Left cardiac atrium (tissue), 4 donors: ENCODE measurements at regions of chr3 and their contacts with region 1.

Region 1: DNA sequence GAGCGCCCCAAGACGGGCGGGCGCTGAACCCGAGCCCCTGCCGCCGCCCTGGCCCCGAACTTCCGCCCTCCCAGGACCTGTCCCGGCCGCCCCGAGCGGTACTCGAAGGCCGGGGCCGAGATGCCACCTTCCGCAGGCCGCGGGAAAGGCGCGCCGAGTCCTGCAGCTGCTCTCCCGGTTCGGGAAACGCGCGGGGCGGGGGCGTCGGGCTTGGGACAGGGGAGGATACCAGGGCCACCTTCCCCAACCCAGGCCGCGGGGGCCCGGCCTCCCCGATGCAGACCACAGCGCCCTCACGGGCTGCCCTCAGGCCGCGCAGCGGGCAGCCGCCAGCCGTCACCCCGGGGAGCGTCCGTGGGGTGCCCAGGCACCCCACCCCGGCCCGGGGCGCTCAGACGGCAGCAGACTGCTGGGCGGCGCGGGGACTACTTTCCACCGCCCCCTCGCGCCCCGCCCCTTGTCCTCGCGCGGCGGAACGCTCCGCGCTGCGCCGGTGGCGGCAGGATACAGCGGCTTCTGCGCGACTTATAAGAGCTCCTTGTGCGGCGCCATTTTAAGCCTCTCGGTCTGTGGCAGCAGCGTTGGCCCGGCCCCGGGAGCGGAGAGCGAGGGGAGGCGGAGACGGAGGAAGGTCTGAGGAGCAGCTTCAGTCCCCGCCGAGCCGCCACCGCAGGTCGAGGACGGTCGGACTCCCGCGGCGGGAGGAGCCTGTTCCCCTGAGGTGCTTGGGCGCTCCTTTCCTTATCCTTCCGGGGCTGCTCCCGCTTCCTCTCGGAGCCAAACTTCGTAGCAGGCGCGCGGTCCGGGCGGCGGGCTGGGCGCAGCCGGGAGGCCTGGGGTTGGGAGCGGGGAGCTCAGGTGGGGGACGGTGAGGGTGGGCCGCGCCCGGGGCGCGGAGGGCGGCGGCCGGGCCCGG is at the start of gene CTNNB1:
- DNase-seq: peak; percentile 93
- ATAC-seq: peak; percentile 93 to 94
- total RNA-seq, gene CTNNB1: 169 to 207 TPM

Region 2: GRCh38 chr3:40877631-40878463 is 321.4 kb before region 1 on chr3:
- intact Hi-C with region 1: loop called in 1 of 2 experiments (anchors 10 kb)
- DNase-seq: peak; percentile 83
- ATAC-seq: peak; percentile 88 to 93

Region 3: GRCh38 chr3:40899286-40899712 is 299.9 kb before region 1 on chr3:
- intact Hi-C with region 1: no loop called
- DNase-seq: no peak
- ATAC-seq: peak in 1 of 2 donors; percentile 27

Region 4: GRCh38 chr3:40971191-40972168 is 227.7 kb before region 1 on chr3:
- intact Hi-C with region 1: loop called in 1 of 2 experiments (anchors 5 kb)
- DNase-seq: peak; percentile 84
- ATAC-seq: peak; percentile 83 to 98

Region 5: DNA sequence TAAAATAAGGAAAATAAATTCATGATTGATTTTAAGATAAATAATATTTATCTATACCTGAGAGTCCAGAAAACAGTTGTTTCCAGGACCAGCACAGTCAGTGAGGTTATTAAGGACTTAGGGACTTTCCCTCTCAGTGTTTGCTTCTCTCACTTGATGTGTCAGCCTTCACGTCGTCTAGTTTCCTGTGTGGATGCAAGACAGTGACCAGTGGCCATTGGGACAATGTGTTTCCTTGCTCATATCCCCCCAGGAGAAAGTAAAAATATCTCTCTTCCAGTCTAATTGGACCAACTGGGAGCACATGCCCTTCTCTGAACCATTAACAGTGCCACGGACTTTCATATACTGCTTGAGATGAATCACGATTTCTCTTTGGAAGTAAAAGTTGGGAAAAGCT is 157.7 kb before region 1 on chr3:
- intact Hi-C with region 1: loop called in 1 of 2 experiments (anchors 5 kb)
- DNase-seq: no peak
- ATAC-seq: peak in 1 of 2 donors; percentile 16

Region 6: DNA sequence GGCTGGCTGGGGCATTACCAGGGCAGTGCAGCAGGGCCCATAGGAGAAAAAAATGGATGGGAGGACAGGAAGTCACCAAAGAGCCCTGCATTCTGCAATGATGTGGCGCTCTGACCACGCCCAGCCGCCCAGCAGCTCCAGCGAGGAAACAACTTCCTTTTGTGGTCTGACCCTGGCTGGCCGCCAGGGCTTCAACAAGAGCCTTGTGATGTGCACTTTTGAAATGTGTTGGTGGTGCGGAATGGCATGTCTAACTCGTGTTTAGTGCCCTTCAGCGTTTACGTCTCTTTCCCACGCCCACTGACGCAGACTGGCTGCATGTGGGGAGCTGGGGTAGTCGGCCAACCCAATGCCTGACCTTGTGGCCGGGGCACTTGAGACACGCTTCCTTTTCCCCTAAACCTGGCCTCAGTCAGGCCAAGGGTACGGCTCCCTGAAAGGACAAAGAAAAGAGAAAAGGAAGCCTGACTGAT is 81.8 kb before region 1 on chr3:
- intact Hi-C with region 1: loop called in 1 of 2 experiments (anchors 5 kb)
- DNase-seq: peak; percentile 94
- ATAC-seq: peak; percentile 91 to 95